Common myeloid progenitor, CD34-positive (primary cell): ENCODE measurements at regions of chr22 and their contacts with region 1.

Region 1: DNA sequence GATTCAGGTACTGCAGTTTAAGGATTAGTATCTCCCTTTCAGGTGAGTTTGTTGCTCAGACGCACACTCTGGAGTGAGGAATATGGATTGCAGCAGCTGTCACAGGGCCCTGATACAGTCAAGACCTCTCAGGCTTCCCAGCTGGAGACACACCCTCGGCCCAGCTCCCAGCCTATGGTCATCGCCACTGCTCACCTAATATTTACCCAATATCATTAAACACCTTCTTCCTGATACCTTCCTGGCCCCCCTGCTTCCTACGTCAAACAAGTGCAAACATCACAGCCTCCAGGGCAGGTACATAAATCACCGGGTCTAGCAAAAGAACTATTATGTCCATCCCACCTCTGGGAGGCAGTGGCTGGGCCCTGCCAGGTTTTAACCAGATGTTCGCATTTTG is 213.3 kb downstream of the MN1 start:
- DNase-seq: no peak
- H3K4me3 ChIP-seq: no peak overlapping the region
- H3K27ac ChIP-seq: no peak overlapping the region
- H3K4me1 ChIP-seq: peaks cover 0 to 2% (median 0%) of the 10 kb centered on the region in 4 experiments
- H3K27me3 ChIP-seq: no peaks in the 10 kb centered on the region

Region 2: GRCh38 chr22:27462190-27462589 is 126.1 kb before region 1 on chr22:
- CTCF ChIA-PET with region 1: no interaction called
- POLR2A ChIA-PET with region 1: interaction called, 13 read pairs
- DNase-seq: no peak
- H3K4me3 ChIP-seq: no peak overlapping the region
- H3K27ac ChIP-seq: no peak overlapping the region
- H3K4me1 ChIP-seq: no peaks in the 10 kb centered on the region
- H3K27me3 ChIP-seq: peaks cover 0 to 4% (median 0%) of the 10 kb centered on the region in 5 experiments

Region 3: DNA sequence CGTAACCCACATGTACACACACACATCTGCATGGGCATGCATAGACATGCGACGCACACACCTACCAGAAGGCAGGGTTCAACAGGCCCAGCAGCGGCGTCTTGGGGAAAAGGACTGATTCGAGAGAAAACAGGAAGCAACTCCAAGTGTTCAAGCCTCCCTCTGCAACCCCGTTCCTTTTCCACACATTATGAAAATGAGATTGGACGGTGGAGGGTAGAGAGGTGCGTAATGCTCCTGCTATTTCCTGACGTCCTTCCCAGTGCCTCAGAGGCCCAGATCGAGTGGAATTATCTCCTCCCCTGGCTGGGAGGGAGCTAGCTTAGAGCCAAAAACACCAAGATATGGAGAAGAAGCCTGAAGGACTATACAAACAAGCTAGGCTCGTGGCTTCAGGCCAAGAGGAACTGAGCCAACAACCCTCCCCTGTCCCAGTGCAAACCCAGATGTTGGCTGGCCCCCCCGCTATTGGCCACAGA is 75.9 kb before region 1 on chr22:
- CTCF ChIA-PET with region 1: no interaction called
- POLR2A ChIA-PET with region 1: no interaction called
- DNase-seq: peak in 2 of 3 donors; percentile 53 to 54
- H3K4me3 ChIP-seq: peak overlapping the region in 1 of 7 experiments; percentile 47
- H3K27ac ChIP-seq: no peak overlapping the region
- H3K4me1 ChIP-seq: peaks cover 0 to 7% (median 3%) of the 10 kb centered on the region in 4 experiments
- H3K27me3 ChIP-seq: no peaks in the 10 kb centered on the region

Region 4: GRCh38 chr22:27561286-27561904 is 26.9 kb before region 1 on chr22:
- CTCF ChIA-PET with region 1: no interaction called
- POLR2A ChIA-PET with region 1: no interaction called
- DNase-seq: no peak
- H3K4me3 ChIP-seq: no peak overlapping the region
- H3K27ac ChIP-seq: no peak overlapping the region
- H3K4me1 ChIP-seq: no peaks in the 10 kb centered on the region
- H3K27me3 ChIP-seq: peaks cover 0 to 4% (median 0%) of the 10 kb centered on the region in 5 experiments